Esophagus muscularis mucosa (tissue), 4 donors: ENCODE measurements at regions of chr2 and their contacts with region 1.

Region 1: DNA sequence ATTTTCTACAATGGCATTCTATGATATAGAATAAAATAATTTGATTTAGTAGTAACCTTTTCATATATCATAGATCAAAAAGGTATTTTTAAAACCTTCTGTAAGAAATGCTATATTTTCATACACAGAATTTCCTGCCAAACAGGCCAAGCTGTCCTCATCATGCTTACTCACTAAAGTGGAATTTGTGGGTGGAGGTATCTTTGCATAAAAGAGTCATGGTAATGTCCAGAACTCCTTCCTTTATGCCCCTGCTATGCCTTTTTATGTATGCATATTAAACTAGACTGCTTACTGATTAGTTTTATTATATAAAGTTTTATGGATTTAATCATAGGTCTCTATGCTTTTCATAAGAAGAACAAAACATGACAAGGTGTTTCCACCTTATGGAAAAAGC is 27.5 kb upstream of the MARCHF7 start:
- DNase-seq: no peak
- H3K4me3 ChIP-seq: no peak overlapping the region
- H3K27ac ChIP-seq: no peak overlapping the region
- H3K4me1 ChIP-seq: no peaks in the 10 kb centered on the region
- H3K27me3 ChIP-seq: no peaks in the 10 kb centered on the region
- CTCF ChIP-seq: no peak
- EP300 ChIP-seq: no peak
- POLR2A ChIP-seq: no peak

Region 2: GRCh38 chr2:159445307-159445706 is 239.5 kb before region 1 on chr2:
- intact Hi-C with region 1: loop called (anchors 10 kb)
- DNase-seq: no peak
- H3K4me3 ChIP-seq: no peak overlapping the region
- H3K27ac ChIP-seq: no peak overlapping the region
- H3K4me1 ChIP-seq: peaks cover 0 to 5% (median 0%) of the 10 kb centered on the region in 4 donors
- H3K27me3 ChIP-seq: no peaks in the 10 kb centered on the region
- CTCF ChIP-seq: no peak
- EP300 ChIP-seq: no peak
- POLR2A ChIP-seq: no peak

Region 3: GRCh38 chr2:159907909-159908308 is 223.1 kb after region 1 on chr2:
- intact Hi-C with region 1: no loop called
- DNase-seq: no peak
- H3K4me3 ChIP-seq: no peak overlapping the region
- H3K27ac ChIP-seq: no peak overlapping the region
- H3K4me1 ChIP-seq: peaks cover 0 to 19% (median 15%) of the 10 kb centered on the region in 4 donors
- H3K27me3 ChIP-seq: peaks cover 0 to 20% (median 7%) of the 10 kb centered on the region in 4 donors
- CTCF ChIP-seq: no peak
- EP300 ChIP-seq: no peak
- POLR2A ChIP-seq: no peak